ENCODE measurements at regions of chr20 and their contacts with region 1.

Region 1: GRCh38 chr20:50695135-50695872 is 4.0 kb upstream of the RIPOR3 start:
- DNase-seq: peak; percentile 35
- H3K4me3 ChIP-seq: no peak overlapping the region
- H3K27ac ChIP-seq: no peak overlapping the region
- H3K4me1 ChIP-seq: peaks cover 10% of the 10 kb centered on the region
- H3K27me3 ChIP-seq: no peaks in the 10 kb centered on the region
- CTCF ChIP-seq: no peak

Region 2: GRCh38 chr20:50645253-50646118 is 49.8 kb before region 1 on chr20:
- CTCF ChIA-PET with region 1: no interaction called
- dilution Hi-C with region 1: loop called (anchors 5 kb)
- in situ Hi-C with region 1: no loop called
- intact Hi-C with region 1: no loop called
- DNase-seq: peak; percentile 95
- H3K4me3 ChIP-seq: peak overlapping the region in 1 of 3 experiments; percentile 16
- H3K27ac ChIP-seq: peak overlapping the region; percentile 67
- H3K4me1 ChIP-seq: peaks cover 13% of the 10 kb centered on the region
- H3K27me3 ChIP-seq: no peaks in the 10 kb centered on the region
- CTCF ChIP-seq: no peak

Region 3: GRCh38 chr20:50737352-50737751 is 42.0 kb after region 1 on chr20:
- CTCF ChIA-PET with region 1: interaction called, 4 read pairs
- dilution Hi-C with region 1: loop called (anchors 5 kb)
- in situ Hi-C with region 1: no loop called
- intact Hi-C with region 1: no loop called
- DNase-seq: no peak
- H3K4me3 ChIP-seq: no peak overlapping the region
- H3K27ac ChIP-seq: no peak overlapping the region
- H3K4me1 ChIP-seq: peaks cover 13% of the 10 kb centered on the region
- H3K27me3 ChIP-seq: no peaks in the 10 kb centered on the region
- CTCF ChIP-seq: no peak

Region 4: DNA sequence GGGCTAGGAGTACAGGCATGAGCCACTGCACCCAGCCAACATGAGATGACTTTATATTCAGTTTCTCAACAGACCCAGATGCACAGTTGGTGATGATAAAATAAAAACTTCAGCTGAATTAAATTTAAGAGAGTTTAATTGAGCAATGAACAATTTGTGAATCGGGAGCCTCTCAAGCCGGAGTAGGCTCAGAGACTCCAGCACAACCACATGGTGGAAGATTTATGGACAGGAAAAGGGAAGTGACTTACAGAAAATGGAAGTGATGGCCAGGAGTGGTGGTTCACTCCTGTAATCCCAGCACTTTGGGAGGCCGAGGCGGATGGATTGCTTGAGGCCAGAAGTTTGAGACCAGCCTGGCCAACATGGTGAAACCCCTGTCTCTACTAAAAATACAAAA is 89.2 kb after region 1 on chr20:
- CTCF ChIA-PET with region 1: no interaction called
- dilution Hi-C with region 1: loop called (anchors 5 kb)
- in situ Hi-C with region 1: no loop called
- intact Hi-C with region 1: no loop called
- DNase-seq: no peak
- H3K4me3 ChIP-seq: no peak overlapping the region
- H3K27ac ChIP-seq: no peak overlapping the region
- H3K4me1 ChIP-seq: no peaks in the 10 kb centered on the region
- H3K27me3 ChIP-seq: no peaks in the 10 kb centered on the region
- CTCF ChIP-seq: no peak